ENCODE measurements at regions of chr2 and their contacts with region 1.

Region 1: GRCh38 chr2:70861777-70862625 is 26.4 kb upstream of the CD207 start:
- DNase-seq: peak; percentile 79 to 91 (median 85)
- H3K4me3 ChIP-seq: no peak overlapping the region
- H3K27ac ChIP-seq: no peak overlapping the region
- H3K4me1 ChIP-seq: no peaks in the 10 kb centered on the region
- H3K27me3 ChIP-seq: peaks cover 19% of the 10 kb centered on the region
- CTCF ChIP-seq: peak; percentile 77 to 97 (median 84)
- POLR2A ChIP-seq: no peak

Region 2: DNA sequence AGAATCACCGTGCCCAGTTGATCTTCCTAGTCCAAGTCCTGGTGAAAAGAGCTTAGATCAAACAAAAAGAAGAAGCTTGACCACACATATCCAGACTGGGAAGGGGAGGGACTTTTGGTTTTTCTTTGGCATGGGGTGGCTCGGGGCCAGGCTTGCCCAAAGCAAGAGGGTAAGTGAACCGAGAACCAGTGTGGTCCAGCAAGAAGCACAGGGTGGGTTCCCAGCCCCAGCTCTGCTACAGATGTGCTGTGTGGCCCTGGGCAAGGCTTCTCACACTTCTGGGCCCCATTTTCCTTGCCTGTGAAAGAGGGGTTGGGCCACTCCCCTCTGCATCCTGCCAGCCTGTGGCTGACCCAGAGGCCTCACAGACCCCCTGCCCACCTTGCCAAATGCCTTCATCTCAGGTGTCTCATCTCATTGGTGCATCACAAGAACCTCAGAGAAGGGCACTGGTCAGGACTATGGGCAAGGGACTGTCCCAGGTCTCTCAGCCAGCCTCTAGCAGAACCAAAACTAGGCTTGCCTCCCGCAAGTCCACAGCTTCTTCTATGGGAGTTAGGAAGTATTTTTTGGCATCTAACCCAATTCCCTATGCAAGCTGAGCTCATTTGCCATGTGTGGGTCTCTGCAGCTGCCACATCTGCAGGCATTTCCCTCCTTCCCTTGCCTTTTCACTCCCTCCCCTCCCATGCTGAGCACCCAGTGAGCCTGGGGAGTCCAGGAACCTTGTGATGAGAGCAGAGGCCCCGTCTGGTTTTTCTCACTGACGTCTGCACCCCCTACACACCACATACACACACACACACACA is 80.6 kb after region 1 on chr2:
- intact Hi-C with region 1: loop called (anchors 5 kb)
- DNase-seq: no peak
- H3K4me3 ChIP-seq: no peak overlapping the region
- H3K27ac ChIP-seq: no peak overlapping the region
- H3K4me1 ChIP-seq: no peaks in the 10 kb centered on the region
- H3K27me3 ChIP-seq: no peaks in the 10 kb centered on the region
- CTCF ChIP-seq: no peak
- POLR2A ChIP-seq: no peak

Region 3: GRCh38 chr2:70948337-70949003 is 86.5 kb after region 1 on chr2:
- intact Hi-C with region 1: loop called (anchors 5 kb)
- DNase-seq: peak; percentile 72 to 85 (median 81)
- H3K4me3 ChIP-seq: peak overlapping the region in 1 of 4 donors; percentile 41
- H3K27ac ChIP-seq: no peak overlapping the region
- H3K4me1 ChIP-seq: peaks cover 3 to 8% of the 10 kb centered on the region in 2 donors
- H3K27me3 ChIP-seq: peaks cover 5% of the 10 kb centered on the region
- CTCF ChIP-seq: peak; percentile 56 to 81 (median 76)
- POLR2A ChIP-seq: no peak